ENCODE measurements at regions of chr5 and their contacts with region 1.

Region 1: GRCh38 chr5:98905857-98906690 is 22.7 kb downstream of the CHD1 start:
- DNase-seq: no peak
- H3K4me3 ChIP-seq: no peak overlapping the region
- H3K27ac ChIP-seq: no peak overlapping the region
- H3K4me1 ChIP-seq: no peaks in the 10 kb centered on the region
- H3K27me3 ChIP-seq: no peaks in the 10 kb centered on the region
- CTCF ChIP-seq: peak; percentile 78 to 82 (median 80)
- POLR2A ChIP-seq: no peak

Region 2: DNA sequence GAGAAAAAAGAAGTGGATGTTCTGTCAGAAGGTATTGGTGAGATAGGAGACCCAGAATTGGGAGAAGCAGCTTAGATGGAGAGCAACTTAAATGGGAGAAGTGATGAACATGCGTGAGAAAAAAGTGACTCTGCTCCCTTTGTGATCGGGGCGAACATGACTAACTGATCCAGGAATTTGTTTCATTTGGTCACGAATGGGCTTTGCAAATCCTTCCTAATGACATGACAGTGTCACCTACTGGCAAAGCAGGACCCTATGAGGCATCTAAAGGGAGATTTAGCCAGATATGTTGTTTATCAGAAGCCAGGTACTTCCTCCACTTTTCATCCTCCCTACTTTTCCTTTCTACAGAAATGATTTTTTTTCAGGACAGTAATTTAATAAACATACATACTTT is 920.0 kb before region 1 on chr5:
- intact Hi-C with region 1: no loop called
- DNase-seq: no peak
- H3K4me3 ChIP-seq: no peak overlapping the region
- H3K27ac ChIP-seq: no peak overlapping the region
- H3K4me1 ChIP-seq: no peaks in the 10 kb centered on the region
- H3K27me3 ChIP-seq: no peaks in the 10 kb centered on the region
- CTCF ChIP-seq: no peak
- POLR2A ChIP-seq: no peak

Region 3: GRCh38 chr5:99032234-99033013 is 126.3 kb after region 1 on chr5:
- intact Hi-C with region 1: loop called (anchors 5 kb)
- DNase-seq: no peak
- H3K4me3 ChIP-seq: peak overlapping the region; percentile 8 to 31
- H3K27ac ChIP-seq: peak overlapping the region; percentile 71
- H3K4me1 ChIP-seq: peaks cover 14% of the 10 kb centered on the region
- H3K27me3 ChIP-seq: no peaks in the 10 kb centered on the region
- CTCF ChIP-seq: peak; percentile 40 to 59 (median 57)
- POLR2A ChIP-seq: no peak